ENCODE measurements at regions of chr11 and their contacts with region 1.

Region 1: GRCh38 chr11:75022759-75023396 is 34.1 kb downstream of the NEU3 start:
- DNase-seq: peak; percentile 45
- ATAC-seq: peak; percentile 100
- H3K4me3 ChIP-seq: no peak overlapping the region
- H3K27ac ChIP-seq: no peak overlapping the region
- H3K4me1 ChIP-seq: no peaks in the 10 kb centered on the region
- H3K27me3 ChIP-seq: no peaks in the 10 kb centered on the region
- CTCF ChIP-seq: peak; percentile 94 to 98 (median 96); a peak in 5 of 6 replicates
- EP300 ChIP-seq: no peak
- POLR2A ChIP-seq: no peak
- RAD21 ChIP-seq: peak; percentile 95

Region 2: DNA sequence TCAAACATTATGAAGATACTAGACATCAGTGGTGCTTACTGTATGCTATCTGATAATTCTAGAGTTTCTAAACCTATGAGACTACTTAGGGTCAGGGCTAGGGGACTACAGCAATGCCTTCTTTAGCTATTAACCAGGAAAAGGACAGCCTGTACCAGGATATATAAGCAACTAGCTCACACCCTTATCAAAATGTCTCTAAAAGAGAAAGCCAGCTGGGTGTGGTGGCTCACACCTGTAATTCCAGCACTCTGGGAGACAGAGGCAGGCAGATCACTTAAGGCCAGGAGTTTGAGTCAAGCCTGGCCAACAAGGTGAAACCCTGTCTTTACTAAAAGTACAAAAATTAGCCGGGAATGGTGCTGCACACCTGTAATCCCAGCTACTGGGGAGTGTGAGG is 1317.8 kb before region 1 on chr11:
- CTCF ChIA-PET with region 1: no interaction called
- POLR2A ChIA-PET with region 1: no interaction called
- RAD21 ChIA-PET with region 1: no interaction called
- SMC1A ChIA-PET with region 1: no interaction called
- in situ Hi-C with region 1: no loop called
- intact Hi-C with region 1: no loop called
- DNase-seq: no peak
- ATAC-seq: no peak
- H3K4me3 ChIP-seq: no peak overlapping the region
- H3K27ac ChIP-seq: no peak overlapping the region
- H3K4me1 ChIP-seq: no peaks in the 10 kb centered on the region
- H3K27me3 ChIP-seq: no peaks in the 10 kb centered on the region
- CTCF ChIP-seq: no peak
- EP300 ChIP-seq: no peak
- POLR2A ChIP-seq: no peak
- RAD21 ChIP-seq: no peak

Region 3: DNA sequence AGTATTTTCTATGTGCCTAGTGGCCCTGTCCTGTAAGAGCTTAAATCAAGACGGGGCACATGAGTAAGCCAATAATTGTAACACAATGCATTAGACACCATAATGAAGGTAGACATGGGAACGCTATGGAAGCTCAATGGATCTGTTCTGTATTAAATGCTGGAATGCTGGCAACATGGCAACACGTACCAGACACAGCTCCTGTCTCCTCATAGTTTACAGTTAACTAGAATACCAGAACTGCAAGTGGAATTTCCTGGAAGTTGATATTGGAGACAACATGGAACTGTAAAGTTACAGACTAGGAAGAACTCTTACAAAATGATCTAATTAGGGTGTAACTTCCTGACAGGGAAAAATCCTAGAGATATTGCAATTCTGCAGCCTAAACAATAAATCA is 723.9 kb before region 1 on chr11:
- CTCF ChIA-PET with region 1: no interaction called
- POLR2A ChIA-PET with region 1: no interaction called
- RAD21 ChIA-PET with region 1: no interaction called
- SMC1A ChIA-PET with region 1: no interaction called
- in situ Hi-C with region 1: no loop called
- intact Hi-C with region 1: no loop called
- DNase-seq: no peak
- ATAC-seq: no peak
- H3K4me3 ChIP-seq: no peak overlapping the region
- H3K27ac ChIP-seq: no peak overlapping the region
- H3K4me1 ChIP-seq: no peaks in the 10 kb centered on the region
- H3K27me3 ChIP-seq: no peaks in the 10 kb centered on the region; a peak in 1 of 4 replicates
- CTCF ChIP-seq: no peak
- EP300 ChIP-seq: no peak
- POLR2A ChIP-seq: no peak
- RAD21 ChIP-seq: no peak

Region 4: GRCh38 chr11:74937696-74938475 is 85.0 kb before region 1 on chr11:
- CTCF ChIA-PET with region 1: interaction called, 10 read pairs
- POLR2A ChIA-PET with region 1: no interaction called
- RAD21 ChIA-PET with region 1: interaction called, 4 read pairs
- SMC1A ChIA-PET with region 1: interaction called, 3 read pairs
- in situ Hi-C with region 1: loop called (anchors 5 kb)
- intact Hi-C with region 1: no loop called
- DNase-seq: no peak
- ATAC-seq: no peak
- H3K4me3 ChIP-seq: no peak overlapping the region
- H3K27ac ChIP-seq: no peak overlapping the region
- H3K4me1 ChIP-seq: peaks cover 10% of the 10 kb centered on the region
- H3K27me3 ChIP-seq: no peaks in the 10 kb centered on the region
- CTCF ChIP-seq: no peak
- EP300 ChIP-seq: no peak
- POLR2A ChIP-seq: no peak
- RAD21 ChIP-seq: no peak

Region 5: DNA sequence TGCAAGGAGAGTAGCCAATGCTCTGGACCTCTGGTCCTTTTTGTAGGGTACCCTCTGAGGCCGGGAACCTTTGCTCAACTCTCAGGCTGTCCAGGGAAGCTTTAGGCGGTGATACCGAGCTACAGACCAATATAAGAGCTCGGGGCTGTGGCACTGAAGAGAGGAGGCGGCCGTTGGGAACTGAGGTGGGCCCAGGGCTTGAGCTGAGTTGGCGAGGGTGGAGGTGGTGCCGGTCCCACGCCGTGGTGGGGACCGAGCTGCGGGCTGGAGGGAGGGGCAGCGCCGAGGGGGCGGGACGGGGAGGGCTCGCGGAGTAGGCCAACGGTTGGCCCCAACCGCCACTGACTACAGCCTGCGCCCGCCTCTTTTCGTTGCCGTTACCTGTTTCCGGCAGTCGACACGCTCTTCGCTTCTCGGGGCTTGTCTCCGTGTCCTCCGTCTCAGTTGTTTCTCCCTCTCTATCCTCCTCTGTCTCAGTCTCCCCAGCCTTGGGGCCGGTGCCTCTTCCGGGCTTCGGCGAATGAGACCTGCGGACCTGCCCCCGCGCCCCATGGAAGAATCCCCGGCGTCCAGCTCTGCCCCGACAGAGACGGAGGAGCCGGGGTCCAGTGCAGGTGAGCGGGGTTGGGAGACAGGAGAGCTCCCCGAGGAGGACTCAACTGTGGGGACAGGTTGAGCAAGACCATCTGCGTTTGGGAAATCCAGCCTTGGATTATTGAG is 34.2 kb before region 1 on chr11 and contains the start of gene NEU3:
- CTCF ChIA-PET with region 1: interaction called, 11 read pairs
- POLR2A ChIA-PET with region 1: no interaction called
- RAD21 ChIA-PET with region 1: interaction called, 5 read pairs
- SMC1A ChIA-PET with region 1: no interaction called
- in situ Hi-C with region 1: no loop called
- intact Hi-C with region 1: no loop called
- DNase-seq: peak; percentile 59
- ATAC-seq: peak; percentile 94
- H3K4me3 ChIP-seq: peak within 1 kb of the TSS; percentile 100
- H3K27ac ChIP-seq: peak within 1 kb of the TSS; percentile 45
- H3K4me1 ChIP-seq: peaks cover 13% of the 10 kb centered on the region
- H3K27me3 ChIP-seq: no peaks in the 10 kb centered on the region
- CTCF ChIP-seq: no peak
- EP300 ChIP-seq: no peak
- POLR2A ChIP-seq: peak; percentile 93
- RAD21 ChIP-seq: no peak
- polyA plus RNA-seq, gene NEU3: 2.5 TPM

Region 6: GRCh38 chr11:75004215-75004614 is 18.7 kb before region 1 on chr11:
- CTCF ChIA-PET with region 1: interaction called, 24 read pairs
- POLR2A ChIA-PET with region 1: no interaction called
- RAD21 ChIA-PET with region 1: interaction called, 5 read pairs
- SMC1A ChIA-PET with region 1: interaction called, 4 read pairs
- in situ Hi-C with region 1: no loop called
- intact Hi-C with region 1: no loop called
- DNase-seq: no peak
- ATAC-seq: peak; percentile 82
- H3K4me3 ChIP-seq: no peak overlapping the region
- H3K27ac ChIP-seq: no peak overlapping the region
- H3K4me1 ChIP-seq: peaks cover 19% of the 10 kb centered on the region
- H3K27me3 ChIP-seq: no peaks in the 10 kb centered on the region
- CTCF ChIP-seq: no peak
- EP300 ChIP-seq: no peak
- POLR2A ChIP-seq: no peak
- RAD21 ChIP-seq: no peak

Region 7: GRCh38 chr11:75142714-75143419 is 120.0 kb after region 1 on chr11:
- CTCF ChIA-PET with region 1: interaction called, 65 read pairs
- POLR2A ChIA-PET with region 1: interaction called, 3 read pairs
- RAD21 ChIA-PET with region 1: interaction called, 34 read pairs
- SMC1A ChIA-PET with region 1: interaction called, 12 read pairs
- in situ Hi-C with region 1: no loop called
- intact Hi-C with region 1: loop called (anchors 1 kb)
- DNase-seq: peak; percentile 55
- ATAC-seq: peak; percentile 78
- H3K4me3 ChIP-seq: no peak overlapping the region
- H3K27ac ChIP-seq: no peak overlapping the region
- H3K4me1 ChIP-seq: peaks cover 24% of the 10 kb centered on the region
- H3K27me3 ChIP-seq: no peaks in the 10 kb centered on the region
- CTCF ChIP-seq: no peak
- EP300 ChIP-seq: no peak
- POLR2A ChIP-seq: no peak
- RAD21 ChIP-seq: no peak

Region 8: DNA sequence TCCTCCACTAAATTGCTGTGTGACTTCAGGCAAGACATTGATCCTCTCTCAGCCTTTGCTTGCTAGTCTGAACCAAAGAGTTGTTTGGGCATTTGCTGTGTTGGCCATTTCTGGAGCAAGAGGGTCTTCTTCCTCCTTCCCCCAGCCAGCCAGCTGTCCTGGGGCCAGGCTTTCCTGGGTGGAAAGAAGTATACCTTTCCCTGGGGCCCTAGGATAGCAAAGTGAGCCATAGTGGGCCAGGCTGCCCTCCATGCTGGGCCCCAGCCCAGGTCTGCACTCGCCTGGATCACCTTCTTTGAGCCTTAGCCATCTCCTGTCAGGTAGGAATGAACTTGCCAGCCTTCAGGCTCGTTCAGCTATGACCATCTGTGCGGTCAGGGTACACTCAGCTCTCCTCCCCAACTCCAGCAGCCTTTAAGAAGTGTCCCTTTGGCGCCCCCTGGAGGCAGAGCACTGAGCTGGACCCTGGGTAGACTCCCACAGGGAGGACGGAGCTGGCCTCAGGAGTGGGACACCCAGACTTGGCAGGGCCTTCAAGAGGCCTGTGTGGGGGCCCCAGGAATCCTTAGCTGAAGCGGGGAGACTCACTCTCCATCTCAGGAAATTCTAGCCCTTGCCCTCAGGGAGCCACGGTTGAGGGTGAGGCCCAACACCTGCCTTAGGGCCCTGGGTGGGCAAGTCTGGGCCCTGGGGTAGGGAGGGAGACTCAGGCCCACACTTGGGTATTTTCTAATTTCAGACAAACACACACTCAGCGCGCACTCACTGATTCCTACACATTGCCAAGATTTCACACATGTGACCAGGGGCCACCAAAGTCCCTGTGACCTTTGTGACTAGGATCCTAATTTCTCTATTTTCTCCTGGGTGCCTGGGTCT is 182.0 kb after region 1 on chr11:
- CTCF ChIA-PET with region 1: interaction called, 136 read pairs
- POLR2A ChIA-PET with region 1: no interaction called
- RAD21 ChIA-PET with region 1: interaction called, 88 read pairs
- SMC1A ChIA-PET with region 1: interaction called, 24 read pairs
- in situ Hi-C with region 1: loop called (anchors 5 kb)
- intact Hi-C with region 1: loop called (anchors 1 kb)
- DNase-seq: peak; percentile 8
- ATAC-seq: peak; percentile 100
- H3K4me3 ChIP-seq: no peak overlapping the region
- H3K27ac ChIP-seq: no peak overlapping the region
- H3K4me1 ChIP-seq: no peaks in the 10 kb centered on the region
- H3K27me3 ChIP-seq: peaks cover 0 to 4% of the 10 kb centered on the region in 2 experiments; a peak in 1 of 4 replicates
- CTCF ChIP-seq: peak; percentile 87 to 94 (median 89)
- EP300 ChIP-seq: no peak
- POLR2A ChIP-seq: no peak
- RAD21 ChIP-seq: peak; percentile 84